ENCODE measurements at regions of chr17 and their contacts with region 1.

Region 1: GRCh38 chr17:75749545-75750389 is 15.2 kb downstream of the GALK1 start:
- DNase-seq: peak; percentile 78 to 84 (median 80)
- H3K4me3 ChIP-seq: no peak overlapping the region
- H3K4me3 Mint-ChIP-seq: no peak overlapping the region
- H3K27ac ChIP-seq: no peak overlapping the region
- H3K27ac Mint-ChIP-seq: peak overlapping the region in 1 of 7 donors; percentile 76
- H3K4me1 ChIP-seq: peaks cover 18 to 29% of the 10 kb centered on the region in 2 donors
- H3K4me1 Mint-ChIP-seq: peaks cover 23% of the 10 kb centered on the region
- H3K27me3 ChIP-seq: peaks cover 0 to 4% of the 10 kb centered on the region in 2 donors
- H3K27me3 Mint-ChIP-seq: peaks cover 7 to 17% (median 10%) of the 10 kb centered on the region in 3 donors
- CTCF ChIP-seq: peak; percentile 86

Region 2: GRCh38 chr17:75632863-75633485 is 116.8 kb before region 1 on chr17 and contains the start of gene SMIM5:
- intact Hi-C with region 1: loop called (anchors 1 to 2 kb)
- DNase-seq: peak; percentile 76 to 85 (median 78)
- H3K4me3 ChIP-seq: no peak within 1 kb of the TSS
- H3K4me3 Mint-ChIP-seq: no peak within 1 kb of the TSS
- H3K27ac ChIP-seq: no peak within 1 kb of the TSS
- H3K27ac Mint-ChIP-seq: peak within 1 kb of the TSS in 1 of 7 donors; percentile 76
- H3K4me1 ChIP-seq: peaks cover 5 to 13% of the 10 kb centered on the region in 2 donors
- H3K4me1 Mint-ChIP-seq: peaks cover 11% of the 10 kb centered on the region
- H3K27me3 ChIP-seq: no peaks in the 10 kb centered on the region
- H3K27me3 Mint-ChIP-seq: peaks cover 2 to 8% (median 4%) of the 10 kb centered on the region in 3 donors
- CTCF ChIP-seq: peak; percentile 87
- polyA plus RNA-seq, gene SMIM5: 0.15 to 3.3 (median 0.43) TPM

Region 3: GRCh38 chr17:75673487-75673886 is 76.3 kb before region 1 on chr17:
- intact Hi-C with region 1: loop called (anchors 1 to 2 kb)
- DNase-seq: no peak
- H3K4me3 ChIP-seq: no peak overlapping the region
- H3K4me3 Mint-ChIP-seq: no peak overlapping the region
- H3K27ac ChIP-seq: peak overlapping the region in 1 of 2 donors; percentile 3
- H3K27ac Mint-ChIP-seq: peak overlapping the region in 5 of 7 donors; percentile 20 to 60 (median 50)
- H3K4me1 ChIP-seq: peaks cover 4 to 8% of the 10 kb centered on the region in 2 donors
- H3K4me1 Mint-ChIP-seq: peaks cover 4% of the 10 kb centered on the region
- H3K27me3 ChIP-seq: no peaks in the 10 kb centered on the region
- H3K27me3 Mint-ChIP-seq: peaks cover 0 to 1% (median 0%) of the 10 kb centered on the region in 3 donors
- CTCF ChIP-seq: no peak

Region 4: DNA sequence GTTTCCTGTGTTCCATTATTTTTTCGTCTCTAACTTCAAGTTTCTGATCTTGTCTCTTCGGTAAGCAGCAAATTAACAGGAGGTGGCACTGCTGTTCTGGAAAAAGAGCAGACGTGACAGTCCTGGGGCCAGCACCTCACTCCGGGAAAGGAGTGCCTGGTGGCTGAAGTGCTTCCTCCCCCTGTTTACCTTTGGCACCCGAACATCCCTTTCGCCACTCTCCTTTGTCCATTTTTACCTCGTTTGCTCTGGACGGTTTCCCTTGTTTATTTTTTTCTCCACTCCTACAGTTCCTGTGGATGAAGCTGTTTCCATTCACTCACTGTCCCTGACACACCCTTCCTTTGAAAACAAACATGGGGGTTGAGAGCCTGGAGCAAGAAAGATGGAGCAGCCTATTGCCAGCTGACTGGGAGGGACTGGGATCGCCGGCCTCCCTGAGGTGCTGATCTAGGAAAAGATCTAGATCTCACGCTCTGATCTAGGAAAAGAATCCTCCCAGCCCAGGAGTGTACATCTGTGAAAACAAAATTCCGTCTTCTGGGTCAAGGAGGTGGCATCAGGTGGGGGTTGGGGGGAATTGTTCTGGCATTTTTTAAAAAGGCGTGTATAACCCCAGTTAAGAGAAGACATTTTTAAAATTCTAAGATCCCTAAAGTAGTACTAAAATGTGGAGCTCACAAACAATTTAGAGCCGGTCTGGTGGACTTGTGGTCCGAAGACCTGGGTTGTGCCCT is 69.9 kb before region 1 on chr17:
- intact Hi-C with region 1: loop called in 1 of 2 experiments (anchors 1 kb)
- DNase-seq: no peak
- H3K4me3 ChIP-seq: no peak overlapping the region
- H3K4me3 Mint-ChIP-seq: no peak overlapping the region
- H3K27ac ChIP-seq: no peak overlapping the region
- H3K27ac Mint-ChIP-seq: peak overlapping the region in 2 of 7 donors; percentile 4 to 70
- H3K4me1 ChIP-seq: peaks cover 4 to 5% of the 10 kb centered on the region in 2 donors
- H3K4me1 Mint-ChIP-seq: peaks cover 10% of the 10 kb centered on the region
- H3K27me3 ChIP-seq: no peaks in the 10 kb centered on the region
- H3K27me3 Mint-ChIP-seq: no peaks in the 10 kb centered on the region
- CTCF ChIP-seq: no peak